Activated CD4-positive, alpha-beta memory T cell treated with anti-CD3 and anti-CD28 coated beads for 36 hours (primary cell): ENCODE measurements at regions of chr1 and their contacts with region 1.

Region 1: DNA sequence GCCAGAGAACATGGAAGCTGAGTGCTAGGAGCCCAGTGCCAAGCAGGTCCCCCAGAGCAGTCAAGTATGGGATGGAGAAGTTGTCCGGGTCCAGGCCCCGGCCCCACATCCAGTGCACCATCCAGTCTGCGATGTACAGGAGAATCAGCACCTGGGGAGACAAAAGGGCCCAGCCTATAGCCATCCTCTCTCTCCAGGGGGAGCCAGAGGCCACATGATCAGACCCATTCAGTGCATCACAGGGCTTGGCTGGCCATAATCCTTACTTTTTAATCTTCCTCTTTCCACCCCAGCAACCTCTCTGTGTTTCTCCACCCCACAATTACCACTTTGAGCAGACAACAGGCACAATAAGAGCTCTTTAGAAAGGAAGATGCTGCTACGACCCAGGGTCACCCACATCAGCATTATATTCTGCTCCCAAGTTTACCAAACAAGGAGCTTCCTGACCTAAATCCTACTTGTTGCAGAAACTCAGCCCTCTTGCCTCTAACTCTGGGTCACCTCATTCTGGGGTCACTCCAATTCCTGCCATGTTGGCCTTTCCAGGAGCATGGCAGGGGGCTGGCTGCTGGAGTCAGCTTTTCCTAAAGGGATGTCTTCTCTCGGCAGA is 16.4 kb upstream of the RAB29 start:
- DNase-seq: peak; percentile 73
- H3K4me3 Mint-ChIP-seq: no peak overlapping the region
- H3K27ac Mint-ChIP-seq: no peak overlapping the region
- H3K4me1 Mint-ChIP-seq: peaks cover 2% of the 10 kb centered on the region
- H3K27me3 Mint-ChIP-seq: no peaks in the 10 kb centered on the region

Region 2: GRCh38 chr1:205729945-205730610 is 61.6 kb before region 1 on chr1:
- CTCF ChIA-PET with region 1: no interaction called
- POLR2A ChIA-PET with region 1: no interaction called
- intact Hi-C with region 1: no loop called
- DNase-seq: no peak
- H3K4me3 Mint-ChIP-seq: no peak overlapping the region
- H3K27ac Mint-ChIP-seq: peak overlapping the region; percentile 42
- H3K4me1 Mint-ChIP-seq: peaks cover 26% of the 10 kb centered on the region
- H3K27me3 Mint-ChIP-seq: no peaks in the 10 kb centered on the region

Region 3: GRCh38 chr1:205805082-205805712 is 13.5 kb after region 1 on chr1:
- CTCF ChIA-PET with region 1: interaction called, 18 read pairs
- POLR2A ChIA-PET with region 1: no interaction called
- intact Hi-C with region 1: no loop called
- DNase-seq: peak; percentile 80
- H3K4me3 Mint-ChIP-seq: peak overlapping the region; percentile 63
- H3K27ac Mint-ChIP-seq: peak overlapping the region; percentile 88
- H3K4me1 Mint-ChIP-seq: peaks cover 56% of the 10 kb centered on the region
- H3K27me3 Mint-ChIP-seq: no peaks in the 10 kb centered on the region

Region 4: GRCh38 chr1:205812878-205813754 is 21.4 kb after region 1 on chr1 and contains the start of gene SLC41A1:
- CTCF ChIA-PET with region 1: interaction called, 18 read pairs
- POLR2A ChIA-PET with region 1: no interaction called
- intact Hi-C with region 1: no loop called
- DNase-seq: peak; percentile 94
- H3K4me3 Mint-ChIP-seq: peak within 1 kb of the TSS; percentile 89
- H3K27ac Mint-ChIP-seq: peak within 1 kb of the TSS; percentile 80
- H3K4me1 Mint-ChIP-seq: peaks cover 52% of the 10 kb centered on the region
- H3K27me3 Mint-ChIP-seq: no peaks in the 10 kb centered on the region
- total RNA-seq, gene SLC41A1: 34.9 to 35.0 TPM

Region 5: DNA sequence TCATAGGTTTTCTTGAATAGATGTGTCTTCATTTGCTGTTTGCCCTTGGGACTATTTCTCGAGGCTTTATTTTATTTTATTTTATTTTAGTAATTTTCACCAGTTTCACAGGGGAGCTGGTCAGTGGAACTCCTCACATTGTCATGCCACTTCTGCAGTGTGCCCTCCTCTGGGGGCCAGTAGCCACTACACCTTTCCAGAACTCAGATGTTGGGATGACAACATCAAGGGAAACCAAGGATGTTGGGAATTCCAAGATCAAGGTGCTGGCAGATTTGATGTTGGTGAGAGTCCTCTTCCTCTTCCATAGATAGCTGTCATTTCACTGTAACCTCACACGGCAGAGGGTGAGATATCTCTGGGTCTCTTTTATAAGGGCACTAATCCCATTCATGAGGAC is 116.1 kb after region 1 on chr1:
- CTCF ChIA-PET with region 1: interaction called, 21 read pairs
- POLR2A ChIA-PET with region 1: no interaction called
- intact Hi-C with region 1: loop called (anchors 1 kb)
- DNase-seq: no peak
- H3K4me3 Mint-ChIP-seq: no peak overlapping the region
- H3K27ac Mint-ChIP-seq: no peak overlapping the region
- H3K4me1 Mint-ChIP-seq: no peaks in the 10 kb centered on the region
- H3K27me3 Mint-ChIP-seq: no peaks in the 10 kb centered on the region

Region 6: DNA sequence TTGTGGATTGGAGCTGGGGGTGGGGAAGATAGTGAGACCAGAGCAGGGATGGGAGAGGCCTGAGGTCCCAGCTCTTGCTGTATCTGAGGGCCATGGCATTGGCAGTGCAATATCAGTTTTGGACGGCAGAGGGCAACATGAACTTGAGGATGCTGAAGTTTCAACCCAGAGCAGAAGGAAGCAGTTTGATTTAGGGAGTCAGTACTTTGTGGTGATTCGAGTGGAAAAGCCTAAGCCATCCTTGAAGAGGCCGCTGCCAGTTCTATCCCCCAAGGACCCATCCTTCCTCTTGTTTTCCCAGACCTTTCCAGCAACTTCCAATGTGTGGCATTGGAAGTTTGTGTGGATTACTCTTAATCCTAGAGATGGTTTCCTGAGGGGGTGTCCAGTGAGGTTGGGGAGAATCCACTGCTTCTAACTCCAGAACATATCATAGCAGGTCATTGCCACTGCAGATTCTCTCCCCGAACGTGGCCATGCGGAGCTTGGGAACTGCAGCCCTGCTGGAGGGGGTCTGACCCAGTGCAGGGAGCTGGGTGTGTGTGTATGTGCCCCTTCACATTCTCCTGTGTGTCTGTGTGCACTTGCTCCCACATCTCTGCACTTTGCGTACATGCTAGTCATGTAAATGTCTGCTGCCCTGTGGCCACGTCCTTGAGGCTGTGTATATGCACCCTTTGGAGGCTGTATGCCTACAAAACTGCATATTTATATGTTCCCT is 127.5 kb after region 1 on chr1:
- CTCF ChIA-PET with region 1: interaction called, 38 read pairs
- POLR2A ChIA-PET with region 1: no interaction called
- intact Hi-C with region 1: no loop called
- DNase-seq: peak; percentile 84
- H3K4me3 Mint-ChIP-seq: no peak overlapping the region
- H3K27ac Mint-ChIP-seq: no peak overlapping the region
- H3K4me1 Mint-ChIP-seq: no peaks in the 10 kb centered on the region
- H3K27me3 Mint-ChIP-seq: no peaks in the 10 kb centered on the region

Region 7: GRCh38 chr1:206106328-206107167 is 314.9 kb after region 1 on chr1:
- CTCF ChIA-PET with region 1: interaction called, 12 read pairs
- POLR2A ChIA-PET with region 1: no interaction called
- intact Hi-C with region 1: loop called (anchors 1 kb)
- DNase-seq: peak; percentile 85
- H3K4me3 Mint-ChIP-seq: no peak overlapping the region
- H3K27ac Mint-ChIP-seq: no peak overlapping the region
- H3K4me1 Mint-ChIP-seq: no peaks in the 10 kb centered on the region
- H3K27me3 Mint-ChIP-seq: no peaks in the 10 kb centered on the region